Gastrocnemius medialis (tissue), 4 donors: ENCODE measurements at regions of chr2 and their contacts with region 1.

Region 1: DNA sequence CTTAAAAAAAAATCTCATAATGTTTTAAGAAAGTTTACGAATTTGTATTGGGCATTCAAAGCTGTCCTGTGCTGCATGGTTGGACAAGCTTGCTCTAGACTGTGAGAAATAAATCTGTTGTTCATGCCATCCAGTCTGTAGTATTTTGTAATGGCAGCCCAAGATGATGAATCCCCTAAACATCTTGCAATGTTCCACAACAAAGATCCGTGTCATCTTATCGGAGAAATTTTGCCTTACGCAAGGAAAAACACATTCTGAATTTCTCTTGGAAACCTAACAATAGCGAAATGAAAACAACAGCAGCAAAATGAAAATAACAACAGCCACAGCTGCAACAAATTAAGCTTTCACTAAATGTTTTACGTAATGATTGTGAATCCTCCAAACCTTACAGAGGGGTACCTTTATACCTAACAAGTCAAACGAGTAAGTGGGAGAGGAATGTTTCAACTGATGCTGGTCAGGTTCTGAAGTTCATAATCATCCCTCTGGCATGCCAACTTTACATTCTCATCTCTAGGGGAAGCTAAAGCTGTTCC is 76.1 kb upstream of the RNU4ATAC start:
- DNase-seq: no peak
- ATAC-seq: no peak
- H3K4me3 ChIP-seq: no peak overlapping the region
- H3K27ac ChIP-seq: no peak overlapping the region
- H3K4me1 ChIP-seq: no peaks in the 10 kb centered on the region
- H3K27me3 ChIP-seq: no peaks in the 10 kb centered on the region
- CTCF ChIP-seq: no peak
- POLR2A ChIP-seq: no peak

Region 2: DNA sequence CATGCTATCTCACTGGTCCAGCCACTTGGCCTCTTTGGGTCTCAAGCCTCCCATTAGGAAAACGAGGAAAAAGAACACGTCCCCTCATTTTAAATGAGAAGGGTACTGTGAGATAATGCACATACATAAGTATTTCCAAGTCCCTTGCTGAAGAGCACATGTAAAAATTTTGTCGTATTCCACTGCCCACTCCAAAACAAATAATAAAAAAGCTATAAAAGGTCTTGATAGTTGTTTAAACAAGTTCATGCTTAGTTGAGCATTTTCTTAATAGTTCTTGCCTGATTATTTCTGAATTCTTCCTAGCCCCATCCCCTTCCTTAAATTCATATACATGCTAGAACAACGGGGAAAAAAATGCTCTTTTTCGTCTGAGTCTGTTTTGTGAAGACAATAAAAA is 34.1 kb before region 1 on chr2:
- in situ Hi-C with region 1: no loop called
- intact Hi-C with region 1: loop called (anchors 5 kb)
- DNase-seq: no peak
- ATAC-seq: no peak
- H3K4me3 ChIP-seq: no peak overlapping the region
- H3K27ac ChIP-seq: no peak overlapping the region
- H3K4me1 ChIP-seq: no peaks in the 10 kb centered on the region
- H3K27me3 ChIP-seq: no peaks in the 10 kb centered on the region
- CTCF ChIP-seq: no peak
- POLR2A ChIP-seq: no peak

Region 3: DNA sequence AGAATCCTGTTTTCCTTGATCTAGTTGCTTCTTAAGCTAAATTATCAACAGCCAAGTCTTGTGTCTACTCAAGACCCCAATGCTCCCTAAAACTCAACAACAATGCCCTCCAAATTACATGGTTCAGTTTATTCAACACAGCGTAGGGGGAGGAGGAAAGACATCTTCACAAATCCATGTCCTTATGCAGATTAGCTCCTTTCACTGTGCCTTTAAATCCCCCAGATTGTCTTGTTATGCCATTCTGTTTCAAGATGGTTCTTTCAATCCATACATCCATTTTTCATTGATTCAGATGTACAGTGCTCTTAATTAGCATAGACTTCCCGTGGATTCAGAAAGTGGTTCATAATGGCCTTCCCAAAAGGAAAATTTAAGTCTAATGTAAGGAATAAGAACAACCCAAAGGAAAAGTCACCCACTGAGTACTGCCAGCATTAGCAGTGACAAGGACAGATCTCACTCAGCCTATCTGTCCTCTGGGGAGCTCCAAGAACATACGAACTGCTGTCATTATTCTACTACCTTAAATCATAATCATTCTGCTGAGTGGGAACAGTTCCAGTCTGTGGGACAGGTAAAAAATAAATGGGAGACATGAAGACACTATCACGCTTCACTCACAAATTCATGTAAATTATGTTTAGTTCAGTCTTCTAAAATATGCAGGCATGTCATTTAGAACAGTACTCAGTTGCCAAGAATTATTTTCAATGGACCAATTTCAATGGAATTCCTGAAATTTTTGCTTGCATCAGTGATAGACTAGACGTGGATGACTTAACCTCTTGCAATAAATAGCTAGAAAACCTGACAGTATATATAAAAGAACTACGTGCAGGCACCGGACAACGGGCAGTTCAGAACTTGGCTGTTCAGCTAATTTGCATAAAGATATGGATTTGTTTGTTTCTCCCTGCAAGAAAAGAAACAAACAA is 17.2 kb after region 1 on chr2:
- in situ Hi-C with region 1: no loop called
- intact Hi-C with region 1: no loop called
- DNase-seq: no peak
- ATAC-seq: no peak
- H3K4me3 ChIP-seq: no peak overlapping the region
- H3K27ac ChIP-seq: no peak overlapping the region
- H3K4me1 ChIP-seq: peaks cover 39 to 44% of the 10 kb centered on the region in 2 donors
- H3K27me3 ChIP-seq: no peaks in the 10 kb centered on the region
- CTCF ChIP-seq: no peak
- POLR2A ChIP-seq: no peak